ENCODE measurements at regions of chr11 and their contacts with region 1.

Region 1: DNA sequence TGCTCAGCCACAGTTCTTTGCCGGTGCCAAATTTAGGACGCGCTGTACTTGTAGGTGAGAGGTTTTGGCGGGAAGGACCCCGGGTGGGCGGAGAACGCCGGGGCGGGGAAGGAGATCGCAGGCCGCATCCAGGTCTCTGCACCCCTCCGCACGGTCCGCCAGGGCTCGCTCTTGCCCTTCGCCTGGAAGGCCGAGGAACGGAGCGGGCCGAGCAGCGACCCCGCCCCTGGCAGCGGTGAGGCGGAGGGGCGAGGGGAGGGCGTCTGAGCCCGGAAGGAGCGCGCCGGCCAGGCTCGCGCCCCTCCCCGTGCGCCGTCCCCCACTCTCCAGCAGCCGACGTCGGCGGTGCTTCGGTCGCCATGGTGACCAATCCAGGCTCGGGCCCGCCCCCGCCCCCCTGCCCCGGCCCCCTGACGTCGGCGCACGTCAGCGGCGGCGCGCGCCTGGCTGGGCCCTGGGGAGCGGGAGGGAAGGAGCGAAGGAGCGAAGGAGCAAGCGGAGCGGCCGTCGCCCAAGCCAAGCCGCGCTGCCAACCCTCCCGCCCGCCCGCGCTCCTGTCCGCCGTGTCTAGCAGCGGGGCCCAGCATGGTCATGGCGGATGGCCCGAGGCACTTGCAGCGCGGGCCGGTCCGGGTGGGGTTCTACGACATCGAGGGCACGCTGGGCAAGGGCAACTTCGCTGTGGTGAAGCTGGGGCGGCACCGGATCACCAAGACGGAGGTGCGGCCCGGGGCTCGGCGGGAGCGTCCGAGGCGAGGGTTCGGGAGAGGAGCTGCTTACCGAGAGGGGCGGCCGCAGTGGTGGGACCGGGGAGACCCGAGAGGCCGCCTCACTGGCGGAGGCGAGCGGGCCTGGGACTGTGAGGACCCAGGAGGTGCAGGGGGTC is at the start of gene SIK2:
- DNase-seq: peak; percentile 94 to 97
- ATAC-seq: peak; percentile 91 to 95 (median 93)
- H3K4me3 ChIP-seq: peak within 1 kb of the TSS; percentile 82
- H3K27ac ChIP-seq: peak within 1 kb of the TSS; percentile 94
- H3K4me1 ChIP-seq: peaks cover 25% of the 10 kb centered on the region
- H3K27me3 ChIP-seq: no peaks in the 10 kb centered on the region
- CTCF ChIP-seq: peak; percentile 93
- total RNA-seq, gene SIK2: 20.5 to 69.6 (median 34.9) TPM

Region 2: GRCh38 chr11:111446404-111447111 is 155.7 kb before region 1 on chr11:
- intact Hi-C with region 1: no loop called
- DNase-seq: peak; percentile 61 to 83
- ATAC-seq: peak; percentile 93 to 98 (median 95)
- H3K4me3 ChIP-seq: no peak overlapping the region
- H3K27ac ChIP-seq: no peak overlapping the region
- H3K4me1 ChIP-seq: peaks cover 19% of the 10 kb centered on the region
- H3K27me3 ChIP-seq: no peaks in the 10 kb centered on the region
- CTCF ChIP-seq: peak; percentile 75

Region 3: DNA sequence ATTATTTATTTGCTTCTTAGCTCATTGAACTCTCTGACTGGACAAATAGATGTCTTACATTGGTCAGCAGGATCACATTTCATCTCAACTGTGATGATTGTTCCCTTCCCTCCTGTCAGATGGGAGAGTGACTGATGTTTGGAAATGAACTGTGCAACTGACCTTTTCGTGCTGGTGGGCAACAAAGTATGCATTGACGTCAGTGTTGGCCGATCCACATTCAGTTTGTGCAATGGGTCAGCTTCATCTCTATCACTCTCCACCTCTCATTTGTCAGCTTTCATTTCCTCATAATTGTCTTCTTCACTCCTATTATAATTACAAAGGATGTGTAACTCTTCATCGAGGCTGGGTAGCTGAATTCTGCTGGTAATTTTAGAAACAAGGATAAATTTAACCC is 92.6 kb after region 1 on chr11:
- intact Hi-C with region 1: loop called in 1 of 2 experiments (anchors 10 kb)
- DNase-seq: peak; percentile 45 to 64
- ATAC-seq: peak; percentile 85 to 93 (median 90)
- H3K4me3 ChIP-seq: peak overlapping the region; percentile 20
- H3K27ac ChIP-seq: peak overlapping the region; percentile 70
- H3K4me1 ChIP-seq: peaks cover 30% of the 10 kb centered on the region
- H3K27me3 ChIP-seq: no peaks in the 10 kb centered on the region
- CTCF ChIP-seq: no peak

Region 4: GRCh38 chr11:111735262-111736116 is 133.3 kb after region 1 on chr11:
- intact Hi-C with region 1: loop called in 1 of 2 experiments (anchors 10 kb)
- DNase-seq: peak; percentile 84 to 85
- ATAC-seq: peak; percentile 39 to 64 (median 51)
- H3K4me3 ChIP-seq: peak overlapping the region; percentile 60
- H3K27ac ChIP-seq: peak overlapping the region; percentile 91
- H3K4me1 ChIP-seq: peaks cover 77% of the 10 kb centered on the region
- H3K27me3 ChIP-seq: no peaks in the 10 kb centered on the region
- CTCF ChIP-seq: no peak

Region 5: DNA sequence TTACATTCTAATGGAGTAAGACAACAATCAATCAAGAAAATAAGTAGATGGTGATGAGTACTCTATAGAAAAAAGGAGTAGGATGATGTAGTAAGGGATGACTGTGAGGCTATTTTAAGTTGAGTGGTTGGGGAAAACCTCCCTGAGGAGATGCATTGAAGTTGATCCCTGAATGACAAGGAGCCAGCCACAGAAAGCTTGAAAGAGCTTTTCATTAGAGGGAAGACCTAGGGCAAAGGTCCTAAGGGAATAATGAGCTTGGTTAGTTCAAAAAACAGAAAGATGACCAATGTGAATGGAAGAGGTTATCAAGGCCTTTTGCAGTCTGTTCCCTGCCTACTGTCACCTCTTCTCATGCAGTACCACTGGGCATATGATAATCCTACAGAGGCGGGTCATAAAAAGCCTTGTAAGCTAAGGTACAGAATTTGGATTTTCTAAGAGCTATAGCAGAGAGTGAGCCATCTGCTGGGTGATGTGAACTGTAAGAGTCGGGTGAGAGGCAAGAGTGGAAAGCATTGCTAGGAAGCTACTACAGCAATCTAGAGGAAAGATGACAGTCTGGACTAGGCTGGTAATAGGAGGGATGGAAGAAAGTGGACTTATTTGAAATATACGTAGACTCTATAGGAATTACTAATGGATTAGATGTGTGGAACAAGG is 160.9 kb after region 1 on chr11:
- intact Hi-C with region 1: loop called in 1 of 2 experiments (anchors 5 kb)
- DNase-seq: no peak
- ATAC-seq: peak in 2 of 4 donors; percentile 21 to 32
- H3K4me3 ChIP-seq: no peak overlapping the region
- H3K27ac ChIP-seq: no peak overlapping the region
- H3K4me1 ChIP-seq: peaks cover 18% of the 10 kb centered on the region
- H3K27me3 ChIP-seq: no peaks in the 10 kb centered on the region
- CTCF ChIP-seq: no peak

Region 6: GRCh38 chr11:111777094-111778046 is 175.1 kb after region 1 on chr11:
- intact Hi-C with region 1: loop called (anchors 1 to 2 kb)
- DNase-seq: no peak
- ATAC-seq: peak; percentile 85 to 93 (median 88)
- H3K4me3 ChIP-seq: no peak overlapping the region
- H3K27ac ChIP-seq: no peak overlapping the region
- H3K4me1 ChIP-seq: no peaks in the 10 kb centered on the region
- H3K27me3 ChIP-seq: no peaks in the 10 kb centered on the region
- CTCF ChIP-seq: peak; percentile 80

Region 7: GRCh38 chr11:111841370-111842053 is 239.3 kb after region 1 on chr11:
- intact Hi-C with region 1: loop called (anchors 1 to 5 kb)
- DNase-seq: peak; percentile 85 to 91
- ATAC-seq: peak; percentile 84 to 90 (median 86)
- H3K4me3 ChIP-seq: no peak overlapping the region
- H3K27ac ChIP-seq: peak overlapping the region; percentile 83
- H3K4me1 ChIP-seq: peaks cover 38% of the 10 kb centered on the region
- H3K27me3 ChIP-seq: no peaks in the 10 kb centered on the region
- CTCF ChIP-seq: peak; percentile 97

Region 8: GRCh38 chr11:112057170-112057569 is 454.9 kb after region 1 on chr11:
- intact Hi-C with region 1: no loop called
- DNase-seq: no peak
- ATAC-seq: no peak
- H3K4me3 ChIP-seq: no peak overlapping the region
- H3K27ac ChIP-seq: no peak overlapping the region
- H3K4me1 ChIP-seq: no peaks in the 10 kb centered on the region
- H3K27me3 ChIP-seq: no peaks in the 10 kb centered on the region
- CTCF ChIP-seq: no peak

Measured in psoas muscle (tissue), 8 donors.